ENCODE measurements at regions of chr15 and their contacts with region 1.

Region 1: GRCh38 chr15:41116116-41116871 is at the start of gene INO80:
- DNase-seq: peak; percentile 97
- H3K4me3 ChIP-seq: peak within 1 kb of the TSS; percentile 89 to 95 (median 90)
- H3K27ac ChIP-seq: peak within 1 kb of the TSS; percentile 96
- H3K4me1 ChIP-seq: peaks cover 11% of the 10 kb centered on the region
- H3K27me3 ChIP-seq: peaks cover 0 to 3% of the 10 kb centered on the region in 2 experiments
- CTCF ChIP-seq: no peak
- POLR2A ChIP-seq: peak; percentile 97
- total RNA-seq, gene INO80: 22.9 and 29.1 TPM in 2 replicates

Region 2: DNA sequence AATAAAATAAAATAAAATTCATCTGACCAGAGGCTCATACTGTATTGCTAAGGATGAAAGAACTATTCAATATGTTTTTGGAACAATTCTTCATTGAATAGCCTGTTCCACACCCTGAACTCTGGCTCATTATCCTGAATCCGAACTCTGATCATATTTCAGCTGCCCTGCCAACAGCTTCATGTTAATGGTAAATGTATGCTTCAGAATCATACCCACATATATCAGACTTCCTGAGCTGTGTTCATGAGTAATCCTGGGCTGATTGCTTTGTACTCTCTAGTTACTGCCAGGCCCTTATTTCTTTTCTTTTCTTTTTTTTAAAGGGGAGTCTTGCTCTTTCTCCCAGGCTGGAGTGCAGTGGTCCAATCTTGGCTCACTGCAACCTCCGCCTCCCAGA is 12.1 kb before region 1 on chr15:
- CTCF ChIA-PET with region 1: interaction called, 4 read pairs
- POLR2A ChIA-PET with region 1: interaction called, 5 read pairs
- dilution Hi-C with region 1: no loop called
- intact Hi-C with region 1: loop called (anchors 1 kb)
- DNase-seq: peak; percentile 70
- H3K4me3 ChIP-seq: no peak overlapping the region
- H3K27ac ChIP-seq: no peak overlapping the region
- H3K4me1 ChIP-seq: peaks cover 2% of the 10 kb centered on the region
- H3K27me3 ChIP-seq: no peaks in the 10 kb centered on the region
- CTCF ChIP-seq: no peak
- POLR2A ChIP-seq: no peak

Region 3: GRCh38 chr15:41180206-41180789 is 64.0 kb after region 1 on chr15:
- CTCF ChIA-PET with region 1: interaction called, 3 read pairs
- POLR2A ChIA-PET with region 1: interaction called, 4 read pairs
- dilution Hi-C with region 1: no loop called
- intact Hi-C with region 1: loop called (anchors 2 kb)
- DNase-seq: no peak
- H3K4me3 ChIP-seq: no peak overlapping the region
- H3K27ac ChIP-seq: no peak overlapping the region
- H3K4me1 ChIP-seq: no peaks in the 10 kb centered on the region
- H3K27me3 ChIP-seq: no peaks in the 10 kb centered on the region
- CTCF ChIP-seq: no peak
- POLR2A ChIP-seq: no peak

Region 4: DNA sequence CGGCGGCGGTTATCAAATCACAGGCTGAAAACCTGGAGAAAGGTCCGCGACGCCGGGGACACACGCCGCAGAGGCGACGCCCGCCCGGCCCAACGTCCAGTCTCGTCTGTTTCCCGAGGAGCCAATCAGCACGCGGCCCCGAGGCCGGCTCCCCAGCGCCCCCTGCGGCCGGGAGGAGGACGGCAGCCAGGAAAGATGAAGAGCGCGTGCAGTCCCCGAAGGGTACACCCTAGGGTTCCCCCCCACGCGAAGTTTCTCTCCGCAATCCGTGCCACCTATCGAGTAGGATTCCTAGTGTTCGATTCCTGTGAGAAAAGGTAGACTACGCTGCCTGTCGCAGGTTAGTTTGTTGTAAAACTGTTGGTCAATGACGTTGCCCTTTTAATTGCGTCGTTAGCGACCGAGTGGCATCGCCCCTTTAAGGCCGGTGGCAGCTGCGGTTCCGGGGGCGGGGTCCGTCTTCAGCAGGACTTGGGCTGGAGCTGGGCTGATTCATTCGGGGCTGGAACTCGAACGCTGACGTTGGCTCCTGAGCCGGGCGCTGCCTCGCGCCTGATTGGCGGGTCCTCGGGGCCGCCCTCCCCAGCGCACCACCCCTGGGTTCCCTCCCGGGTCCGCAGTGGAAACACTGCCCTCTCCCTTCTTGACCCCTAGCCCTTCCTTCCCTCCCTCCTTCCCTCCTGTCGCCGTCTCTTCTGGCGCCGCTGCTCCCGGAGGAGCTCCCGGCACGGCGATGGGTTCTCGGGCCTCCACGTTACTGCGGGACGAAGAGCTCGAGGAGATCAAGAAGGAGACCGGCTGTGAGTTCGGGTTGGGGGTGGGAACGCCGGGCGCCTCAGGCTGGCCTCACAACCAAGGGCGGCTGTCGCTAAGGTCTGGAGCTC is 114.6 kb after region 1 on chr15 and contains the starts of genes CHP1 and EXD1:
- CTCF ChIA-PET with region 1: interaction called, 3 read pairs
- POLR2A ChIA-PET with region 1: no interaction called
- dilution Hi-C with region 1: no loop called
- intact Hi-C with region 1: loop called (anchors 1 kb)
- DNase-seq: peak; percentile 98
- H3K4me3 ChIP-seq: peak within 1 kb of the TSS; percentile 73 to 96 (median 87)
- H3K27ac ChIP-seq: peak within 1 kb of the TSS; percentile 71
- H3K4me1 ChIP-seq: peaks cover 15% of the 10 kb centered on the region
- H3K27me3 ChIP-seq: no peaks in the 10 kb centered on the region
- CTCF ChIP-seq: peak; percentile 93 to 98
- POLR2A ChIP-seq: peak; percentile 67
- total RNA-seq, gene CHP1: 84.4 and 96.2 TPM in 2 replicates
- total RNA-seq, gene EXD1: not detected in 2 replicates

Region 5: GRCh38 chr15:41331833-41332787 is 215.8 kb after region 1 on chr15 and contains the start of gene OIP5:
- CTCF ChIA-PET with region 1: no interaction called
- POLR2A ChIA-PET with region 1: no interaction called
- dilution Hi-C with region 1: no loop called
- intact Hi-C with region 1: loop called (anchors 1 kb)
- DNase-seq: peak; percentile 100
- H3K4me3 ChIP-seq: peak within 1 kb of the TSS; percentile 63 to 94 (median 93)
- H3K27ac ChIP-seq: peak within 1 kb of the TSS; percentile 73
- H3K4me1 ChIP-seq: peaks cover 24% of the 10 kb centered on the region
- H3K27me3 ChIP-seq: no peaks in the 10 kb centered on the region
- CTCF ChIP-seq: peak; percentile 55 to 72
- POLR2A ChIP-seq: peak; percentile 88
- total RNA-seq, gene OIP5: 9.2 and 11.4 TPM in 2 replicates